ENCODE measurements at regions of chr6 and their contacts with region 1.

Region 1: DNA sequence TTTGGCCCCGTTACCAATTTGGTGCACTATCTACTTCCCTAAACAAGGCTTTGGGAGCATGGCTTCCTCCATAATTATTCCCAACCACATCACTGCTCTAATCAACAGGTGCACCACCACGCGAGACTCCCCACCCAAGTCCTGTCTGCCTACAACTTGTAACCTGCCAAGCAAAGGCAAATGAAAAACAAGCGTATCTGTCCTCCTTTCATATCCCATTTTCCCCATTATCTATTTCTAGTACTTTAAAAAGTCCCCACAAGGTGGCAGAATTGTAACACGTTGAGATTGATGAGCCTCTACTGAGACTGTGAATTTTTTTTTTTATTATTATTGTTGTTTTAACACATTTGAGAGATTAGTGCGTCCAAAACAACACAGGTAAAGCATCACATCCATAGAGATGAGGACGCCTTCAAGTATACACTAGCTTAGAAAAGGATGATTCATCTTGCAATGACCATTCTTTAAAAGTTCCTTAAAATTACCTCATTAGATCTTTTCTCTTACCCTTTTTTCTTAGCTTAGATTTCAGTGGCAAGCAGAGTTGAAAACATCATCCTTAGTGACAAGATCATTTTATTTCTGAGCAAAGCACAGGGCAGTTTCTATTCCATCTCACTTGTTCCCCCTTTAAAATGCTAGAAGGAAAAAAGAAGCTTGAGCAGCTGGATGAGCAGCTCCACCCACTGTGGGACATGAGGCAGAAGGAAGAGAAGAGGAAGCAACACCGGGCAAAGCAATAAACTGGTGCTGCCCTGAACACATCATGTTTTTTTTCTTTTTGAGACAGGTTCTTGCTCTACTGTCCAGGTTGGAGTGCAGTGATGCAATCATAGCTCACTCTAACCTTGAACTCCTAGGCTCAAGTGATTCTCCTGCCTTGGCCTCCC is 210.8 kb downstream of the ARHGAP18 start:
- DNase-seq: peak in 7 of 9 donors; percentile 25 to 60 (median 52)
- ATAC-seq: peak; percentile 82
- H3K4me3 ChIP-seq: peak overlapping the region; percentile 37
- H3K4me3 Mint-ChIP-seq: peak overlapping the region; percentile 23 to 81 (median 64)
- H3K27ac ChIP-seq: no peak overlapping the region
- H3K27ac Mint-ChIP-seq: peak overlapping the region in 7 of 9 donors; percentile 0 to 62 (median 2)
- H3K4me1 ChIP-seq: peaks cover 0 to 5% of the 10 kb centered on the region in 2 donors
- H3K4me1 Mint-ChIP-seq: peaks cover 9 to 43% (median 18%) of the 10 kb centered on the region in 7 donors
- H3K27me3 ChIP-seq: no peaks in the 10 kb centered on the region
- H3K27me3 Mint-ChIP-seq: no peaks in the 10 kb centered on the region

Region 2: DNA sequence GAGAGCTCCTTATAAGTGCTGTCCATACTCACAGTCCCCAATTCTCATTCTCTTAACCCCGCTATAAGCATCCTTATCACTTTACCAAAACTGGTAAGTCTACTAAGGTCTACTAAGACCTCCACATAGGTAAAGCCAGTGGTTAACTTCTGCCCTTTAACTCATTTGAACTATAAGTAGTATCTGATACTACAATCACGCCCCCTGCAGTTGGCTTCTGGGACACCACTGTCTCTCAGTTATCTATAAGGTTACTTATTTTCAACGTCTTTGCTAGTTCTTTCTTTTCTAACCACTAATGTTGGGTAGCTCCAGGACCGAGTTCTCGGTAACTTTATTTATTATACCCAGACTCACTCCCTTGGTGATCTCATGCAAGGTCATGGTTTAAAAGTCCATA is 68.2 kb after region 1 on chr6:
- CTCF ChIA-PET with region 1: interaction called, 3 read pairs
- POLR2A ChIA-PET with region 1: no interaction called
- intact Hi-C with region 1: loop called in 1 of 2 experiments (anchors 1 kb)
- DNase-seq: peak in 1 of 9 donors; percentile 26
- ATAC-seq: no peak
- H3K4me3 ChIP-seq: no peak overlapping the region
- H3K4me3 Mint-ChIP-seq: no peak overlapping the region
- H3K27ac ChIP-seq: no peak overlapping the region
- H3K27ac Mint-ChIP-seq: no peak overlapping the region
- H3K4me1 ChIP-seq: no peaks in the 10 kb centered on the region
- H3K4me1 Mint-ChIP-seq: peaks cover 0 to 9% (median 4%) of the 10 kb centered on the region in 7 donors
- H3K27me3 ChIP-seq: no peaks in the 10 kb centered on the region
- H3K27me3 Mint-ChIP-seq: peaks cover 0 to 8% (median 0%) of the 10 kb centered on the region in 5 donors

Region 3: DNA sequence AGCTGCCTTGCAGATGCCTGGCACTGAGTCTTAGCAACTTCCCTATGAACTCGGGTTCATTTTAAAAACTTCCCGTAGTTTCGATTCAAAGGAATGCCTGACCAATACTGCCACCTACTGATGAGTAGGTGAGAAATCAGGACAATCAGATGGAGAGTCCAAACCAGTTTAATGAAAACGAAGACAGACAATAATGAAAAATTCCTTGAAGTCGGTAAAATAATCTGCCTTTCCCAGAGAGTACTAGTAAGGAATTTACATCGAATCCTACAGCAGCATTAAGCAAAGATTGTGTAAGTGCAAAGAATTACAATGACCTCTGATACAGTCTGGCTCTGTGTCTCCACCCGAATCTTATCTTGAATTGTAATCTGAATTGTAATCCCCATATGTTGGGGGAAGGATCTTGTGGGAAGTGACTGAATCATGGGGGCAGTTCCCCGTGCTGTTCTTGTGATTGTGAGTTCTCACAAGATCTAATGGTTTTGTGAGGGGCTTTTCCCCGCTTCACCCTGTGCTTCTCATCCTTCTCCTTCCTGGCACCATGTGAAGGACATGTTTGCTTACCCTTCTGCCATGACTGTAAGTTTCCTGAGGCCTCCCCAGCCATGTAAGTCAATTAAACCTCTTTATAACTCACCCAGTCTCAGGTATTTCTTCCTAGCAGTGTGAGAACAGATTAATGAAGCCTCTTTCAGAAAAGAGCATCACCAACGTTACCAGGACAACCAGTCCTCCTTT is 76.4 kb after region 1 on chr6:
- CTCF ChIA-PET with region 1: interaction called, 4 read pairs
- POLR2A ChIA-PET with region 1: interaction called, 3 read pairs
- intact Hi-C with region 1: loop called (anchors 1 kb)
- DNase-seq: peak in 5 of 9 donors; percentile 4 to 31 (median 21)
- ATAC-seq: peak; percentile 71
- H3K4me3 ChIP-seq: no peak overlapping the region
- H3K4me3 Mint-ChIP-seq: peak overlapping the region in 9 of 10 donors; percentile 48 to 66 (median 59)
- H3K27ac ChIP-seq: no peak overlapping the region
- H3K27ac Mint-ChIP-seq: peak overlapping the region in 2 of 9 donors; percentile 22 to 41
- H3K4me1 ChIP-seq: peaks cover 0 to 3% of the 10 kb centered on the region in 2 donors
- H3K4me1 Mint-ChIP-seq: peaks cover 0 to 11% (median 8%) of the 10 kb centered on the region in 7 donors
- H3K27me3 ChIP-seq: no peaks in the 10 kb centered on the region
- H3K27me3 Mint-ChIP-seq: peaks cover 0 to 5% (median 0%) of the 10 kb centered on the region in 5 donors

Region 4: DNA sequence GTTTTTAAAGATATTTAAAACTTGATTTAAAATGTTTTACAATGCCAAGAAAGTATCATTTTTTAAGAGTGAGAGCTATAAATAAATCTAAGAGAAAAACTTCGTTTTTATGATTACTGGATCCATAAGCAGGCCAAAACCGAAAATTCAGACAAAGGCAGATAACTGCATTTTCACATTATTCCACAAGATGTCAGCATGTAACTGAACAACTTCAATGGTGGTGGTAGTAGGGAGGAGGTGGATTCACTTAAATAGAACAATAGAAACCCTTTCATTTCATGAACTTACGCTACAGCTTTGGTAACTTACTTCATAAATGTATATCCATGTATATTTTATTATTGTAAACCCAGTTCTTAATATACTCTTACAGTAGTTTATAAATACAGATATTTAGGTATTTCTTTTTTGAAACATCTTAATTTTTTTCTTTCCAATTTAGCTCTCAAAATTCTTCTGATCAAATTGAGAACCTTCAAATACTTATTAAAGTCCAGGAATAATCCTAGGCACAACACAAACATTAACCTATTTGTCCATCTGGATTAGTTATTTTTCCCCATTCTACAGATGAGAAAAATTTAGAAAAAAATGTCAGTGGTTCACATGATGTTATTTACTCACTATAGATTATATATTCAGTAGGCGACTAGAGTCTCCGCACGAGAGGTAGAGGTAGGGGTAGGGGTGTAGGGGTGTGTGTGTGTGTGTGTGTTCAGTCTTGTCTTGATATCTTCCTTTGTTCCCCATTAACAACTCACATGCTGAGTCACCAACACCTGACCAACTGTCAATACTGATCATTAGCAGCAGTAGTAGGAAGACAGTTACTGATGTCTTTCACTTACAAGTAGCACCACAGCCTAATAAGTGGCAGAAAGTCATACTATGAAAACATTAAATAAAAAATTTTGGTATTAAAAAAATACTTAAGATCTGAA is 99.3 kb after region 1 on chr6:
- CTCF ChIA-PET with region 1: interaction called, 3 read pairs
- POLR2A ChIA-PET with region 1: no interaction called
- intact Hi-C with region 1: loop called in 1 of 2 experiments (anchors 1 kb)
- DNase-seq: peak in 7 of 9 donors; percentile 37 to 79 (median 70)
- ATAC-seq: peak; percentile 95
- H3K4me3 ChIP-seq: no peak overlapping the region
- H3K4me3 Mint-ChIP-seq: no peak overlapping the region
- H3K27ac ChIP-seq: no peak overlapping the region
- H3K27ac Mint-ChIP-seq: no peak overlapping the region
- H3K4me1 ChIP-seq: no peaks in the 10 kb centered on the region
- H3K4me1 Mint-ChIP-seq: peaks cover 0 to 2% (median 0%) of the 10 kb centered on the region in 7 donors
- H3K27me3 ChIP-seq: no peaks in the 10 kb centered on the region
- H3K27me3 Mint-ChIP-seq: peaks cover 0 to 3% (median 0%) of the 10 kb centered on the region in 5 donors

Region 5: DNA sequence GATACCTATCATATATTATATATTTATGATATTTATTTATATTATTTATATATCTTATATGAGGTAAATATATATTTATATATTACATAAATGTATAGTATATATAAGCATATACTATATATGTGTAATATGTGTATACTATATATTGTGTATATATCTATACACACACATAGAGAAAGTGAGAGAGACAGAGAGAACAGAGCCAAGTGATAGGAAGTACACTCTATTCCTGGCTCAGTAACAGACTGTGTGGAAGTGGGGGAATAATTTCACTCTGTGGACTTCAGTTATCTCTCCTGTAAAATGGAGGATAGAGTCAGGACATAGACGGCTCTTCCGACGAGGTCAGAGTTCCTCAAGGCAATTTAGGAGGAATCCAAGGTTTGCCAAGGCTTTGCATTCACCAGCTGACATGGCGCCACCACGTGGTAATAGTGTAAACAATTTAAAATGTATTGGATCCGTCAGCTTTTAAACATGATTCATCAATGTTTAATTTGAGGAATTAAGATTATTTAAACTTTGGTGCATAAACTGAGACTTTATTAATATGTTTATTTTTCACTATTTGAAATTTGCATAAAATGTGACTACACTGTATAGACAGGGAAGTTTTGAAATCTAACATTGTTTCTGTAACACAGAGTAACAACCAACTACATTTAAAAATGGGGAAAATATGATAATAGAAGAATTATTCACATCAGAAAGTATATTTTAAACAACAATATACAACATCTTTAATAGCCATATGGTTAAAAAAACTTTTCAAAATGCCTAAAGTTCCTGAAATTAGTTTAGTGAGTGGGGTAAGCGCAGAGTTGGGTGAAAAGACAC is 437.4 kb after region 1 on chr6:
- CTCF ChIA-PET with region 1: no interaction called
- POLR2A ChIA-PET with region 1: no interaction called
- intact Hi-C with region 1: loop called (anchors 1 kb)
- DNase-seq: peak in 5 of 9 donors; percentile 21 to 47 (median 28)
- ATAC-seq: peak; percentile 77
- H3K4me3 ChIP-seq: no peak overlapping the region
- H3K4me3 Mint-ChIP-seq: no peak overlapping the region
- H3K27ac ChIP-seq: no peak overlapping the region
- H3K27ac Mint-ChIP-seq: no peak overlapping the region
- H3K4me1 ChIP-seq: no peaks in the 10 kb centered on the region
- H3K4me1 Mint-ChIP-seq: peaks cover 0 to 3% (median 0%) of the 10 kb centered on the region in 7 donors
- H3K27me3 ChIP-seq: no peaks in the 10 kb centered on the region
- H3K27me3 Mint-ChIP-seq: peaks cover 19 to 32% (median 24%) of the 10 kb centered on the region in 5 donors

Region 6: DNA sequence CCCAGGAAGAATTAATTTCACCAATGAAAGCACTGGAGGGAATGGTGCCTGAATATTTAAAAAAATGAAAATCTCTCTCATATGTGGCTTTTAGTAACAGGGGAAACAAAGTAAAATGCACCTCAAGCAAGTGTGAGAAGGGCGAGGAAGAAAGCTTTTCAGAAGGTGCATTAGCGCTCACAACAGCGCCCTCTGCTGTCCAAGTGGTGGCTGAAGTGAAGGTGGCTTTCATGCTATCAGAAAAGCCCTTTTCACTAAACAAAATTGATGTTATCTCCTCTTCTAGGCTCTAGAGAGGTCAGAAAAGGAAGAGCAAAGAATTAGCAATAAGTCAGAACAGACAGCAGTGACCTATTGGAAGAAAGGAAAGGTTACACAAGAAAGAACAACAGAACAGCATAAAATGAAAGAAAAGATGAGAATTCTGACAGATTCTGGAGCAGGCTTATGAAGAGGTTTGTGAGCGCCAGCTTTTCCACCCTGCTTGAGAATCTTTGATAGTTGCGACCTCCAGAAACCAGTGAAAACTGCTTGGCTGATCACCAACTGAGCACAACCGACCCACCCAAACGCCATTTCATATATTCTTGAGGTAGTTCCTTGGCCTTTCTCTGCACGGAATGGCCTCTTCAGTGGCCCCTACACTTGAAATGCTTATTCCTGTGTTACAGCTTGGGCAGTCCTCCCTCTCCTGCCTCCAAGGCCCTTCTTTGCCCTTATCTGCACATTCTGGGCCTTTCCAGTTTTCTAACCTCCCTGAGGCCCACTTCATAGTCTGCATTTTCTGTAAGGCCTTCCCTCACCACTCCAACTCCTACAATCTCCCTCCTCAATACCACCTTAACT is 1373.3 kb after region 1 on chr6:
- CTCF ChIA-PET with region 1: interaction called, 4 read pairs
- POLR2A ChIA-PET with region 1: no interaction called
- intact Hi-C with region 1: loop called in 1 of 2 experiments (anchors 1 kb)
- DNase-seq: peak; percentile 14 to 65 (median 52)
- ATAC-seq: peak; percentile 74
- H3K4me3 ChIP-seq: no peak overlapping the region
- H3K4me3 Mint-ChIP-seq: no peak overlapping the region
- H3K27ac ChIP-seq: no peak overlapping the region
- H3K27ac Mint-ChIP-seq: no peak overlapping the region
- H3K4me1 ChIP-seq: no peaks in the 10 kb centered on the region
- H3K4me1 Mint-ChIP-seq: peaks cover 2 to 6% (median 4%) of the 10 kb centered on the region in 7 donors
- H3K27me3 ChIP-seq: no peaks in the 10 kb centered on the region
- H3K27me3 Mint-ChIP-seq: no peaks in the 10 kb centered on the region